ENCODE measurements at regions of chr20 and their contacts with region 1.

Region 1: DNA sequence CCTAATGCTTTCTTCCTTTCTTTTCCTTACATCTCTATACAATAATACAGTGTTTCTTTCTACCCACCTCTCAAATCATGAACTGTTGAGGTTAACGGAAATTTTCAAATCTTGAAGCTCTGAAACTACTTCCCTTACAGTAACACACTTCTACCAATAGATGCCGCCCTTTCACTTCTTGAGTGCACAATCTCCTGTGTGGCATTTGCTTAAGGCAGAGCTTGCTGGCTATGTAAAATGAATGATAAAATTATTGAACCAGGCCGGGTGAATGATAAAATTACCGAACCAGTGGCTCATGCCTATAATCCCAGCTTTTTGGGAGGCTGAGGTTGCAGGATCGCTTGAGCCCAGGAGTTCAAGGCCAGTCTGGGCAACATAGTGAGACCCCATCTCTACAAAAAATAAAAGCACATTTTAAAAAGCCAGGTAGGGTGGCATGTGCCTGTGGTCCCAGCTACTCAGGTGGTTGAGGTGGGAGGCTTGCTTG is 56.8 kb downstream of the KCNS1 start:
- DNase-seq: peak in 5 of 9 experiments; percentile 30 to 82 (median 42)
- ATAC-seq: peak; percentile 86
- H3K4me3 ChIP-seq: no peak overlapping the region
- H3K4me3 Mint-ChIP-seq: no peak overlapping the region
- H3K27ac ChIP-seq: peak overlapping the region in 1 of 2 experiments; percentile 22
- H3K27ac Mint-ChIP-seq: peak overlapping the region; percentile 33
- H3K4me1 ChIP-seq: peaks cover 40% of the 10 kb centered on the region
- H3K4me1 Mint-ChIP-seq: peaks cover 79% of the 10 kb centered on the region
- H3K27me3 ChIP-seq: no peaks in the 10 kb centered on the region
- H3K27me3 Mint-ChIP-seq: no peaks in the 10 kb centered on the region
- CTCF ChIP-seq: peak; percentile 90

Region 2: DNA sequence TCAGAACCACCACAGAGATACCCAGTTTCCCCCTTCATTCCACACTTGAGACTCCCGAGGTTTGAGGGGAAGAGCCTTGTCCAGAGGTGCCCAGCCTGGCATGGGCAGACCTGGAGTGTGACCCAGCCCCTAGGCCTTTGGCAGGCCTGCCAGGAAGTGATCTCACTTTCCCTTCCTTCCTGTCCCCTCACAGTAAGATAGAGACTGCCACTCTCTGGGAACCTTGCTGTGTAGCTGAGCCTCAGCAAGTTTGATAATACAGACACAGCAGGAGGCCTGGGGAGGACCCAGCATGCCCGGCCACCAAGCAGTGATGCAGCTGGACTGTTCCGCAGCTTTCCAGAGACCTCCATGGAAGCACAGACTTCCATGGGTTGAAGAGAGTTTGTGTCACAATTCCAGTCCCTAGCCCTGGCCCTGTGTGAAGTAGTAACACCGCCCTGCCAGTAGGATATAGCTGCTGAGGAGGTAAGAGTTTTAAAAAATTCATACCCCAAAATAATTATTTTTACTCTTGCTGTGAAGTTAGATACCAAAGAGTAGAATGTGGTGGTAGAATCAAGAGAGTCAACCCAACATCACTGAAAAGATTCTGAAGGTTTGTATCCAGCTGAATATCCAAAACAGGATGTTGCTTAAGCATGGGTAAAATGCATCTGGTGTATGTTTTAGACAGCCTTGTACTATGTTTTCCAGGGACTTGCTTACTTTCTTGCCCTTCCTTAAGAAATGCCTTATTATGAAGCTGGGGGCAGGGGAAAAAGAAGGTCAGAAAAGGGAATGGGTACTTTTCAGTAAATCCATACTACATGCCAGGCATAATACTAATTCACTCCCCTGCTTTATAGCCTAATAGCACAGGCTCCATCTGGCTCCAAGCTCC is 445.5 kb before region 1 on chr20:
- CTCF ChIA-PET with region 1: no interaction called
- POLR2A ChIA-PET with region 1: no interaction called
- intact Hi-C with region 1: no loop called
- DNase-seq: peak in 1 of 9 experiments; percentile 41
- ATAC-seq: peak; percentile 38
- H3K4me3 ChIP-seq: peak overlapping the region in 1 of 2 experiments; percentile 10
- H3K4me3 Mint-ChIP-seq: peak overlapping the region; percentile 67
- H3K27ac ChIP-seq: peak overlapping the region in 1 of 2 experiments; percentile 38
- H3K27ac Mint-ChIP-seq: peak overlapping the region; percentile 87
- H3K4me1 ChIP-seq: peaks cover 26% of the 10 kb centered on the region
- H3K4me1 Mint-ChIP-seq: peaks cover 39% of the 10 kb centered on the region
- H3K27me3 ChIP-seq: no peaks in the 10 kb centered on the region
- H3K27me3 Mint-ChIP-seq: no peaks in the 10 kb centered on the region
- CTCF ChIP-seq: peak; percentile 13

Region 3: GRCh38 chr20:44909872-44910689 is 134.0 kb before region 1 on chr20 and contains the start of gene PABPC1L:
- CTCF ChIA-PET with region 1: no interaction called
- POLR2A ChIA-PET with region 1: no interaction called
- intact Hi-C with region 1: loop called in 1 of 2 experiments (anchors 5 kb)
- DNase-seq: peak; percentile 46 to 89 (median 79)
- ATAC-seq: peak; percentile 99
- H3K4me3 ChIP-seq: peak within 1 kb of the TSS; percentile 66 to 78
- H3K4me3 Mint-ChIP-seq: peak within 1 kb of the TSS; percentile 81
- H3K27ac ChIP-seq: peak within 1 kb of the TSS; percentile 19 to 35
- H3K27ac Mint-ChIP-seq: peak within 1 kb of the TSS; percentile 66
- H3K4me1 ChIP-seq: peaks cover 21% of the 10 kb centered on the region
- H3K4me1 Mint-ChIP-seq: peaks cover 30% of the 10 kb centered on the region
- H3K27me3 ChIP-seq: no peaks in the 10 kb centered on the region
- H3K27me3 Mint-ChIP-seq: no peaks in the 10 kb centered on the region
- CTCF ChIP-seq: no peak
- total RNA-seq, gene PABPC1L: 31.9 to 34.0 TPM

Region 4: DNA sequence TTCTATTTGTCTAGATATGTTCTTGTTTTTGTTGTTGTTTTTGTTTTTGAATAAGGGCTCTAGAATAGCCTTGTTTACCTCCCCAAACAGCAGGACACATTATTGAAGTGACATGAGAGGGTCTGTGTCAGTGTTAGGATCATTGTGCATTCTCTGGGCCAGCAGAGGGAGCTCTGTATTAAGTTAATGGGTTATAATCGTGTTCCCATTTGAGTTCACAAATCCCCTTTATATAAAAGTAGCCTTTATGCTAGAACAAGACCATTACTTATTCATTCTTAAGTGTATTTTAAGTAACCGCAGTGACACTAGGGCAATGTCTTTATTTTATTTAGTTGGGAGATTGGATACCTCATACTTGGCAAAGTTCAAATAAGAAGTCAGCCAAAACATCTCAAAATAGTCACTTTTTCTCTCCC is 33.0 kb before region 1 on chr20:
- CTCF ChIA-PET with region 1: interaction called, 12 read pairs
- POLR2A ChIA-PET with region 1: no interaction called
- intact Hi-C with region 1: loop called in 1 of 2 experiments (anchors 5 kb)
- DNase-seq: peak in 8 of 9 experiments; percentile 14 to 74 (median 57)
- ATAC-seq: peak; percentile 66
- H3K4me3 ChIP-seq: no peak overlapping the region
- H3K4me3 Mint-ChIP-seq: no peak overlapping the region
- H3K27ac ChIP-seq: peak overlapping the region in 1 of 2 experiments; percentile 29
- H3K27ac Mint-ChIP-seq: peak overlapping the region; percentile 35
- H3K4me1 ChIP-seq: peaks cover 23% of the 10 kb centered on the region
- H3K4me1 Mint-ChIP-seq: peaks cover 70% of the 10 kb centered on the region
- H3K27me3 ChIP-seq: no peaks in the 10 kb centered on the region
- H3K27me3 Mint-ChIP-seq: no peaks in the 10 kb centered on the region
- CTCF ChIP-seq: peak; percentile 74

Region 5: DNA sequence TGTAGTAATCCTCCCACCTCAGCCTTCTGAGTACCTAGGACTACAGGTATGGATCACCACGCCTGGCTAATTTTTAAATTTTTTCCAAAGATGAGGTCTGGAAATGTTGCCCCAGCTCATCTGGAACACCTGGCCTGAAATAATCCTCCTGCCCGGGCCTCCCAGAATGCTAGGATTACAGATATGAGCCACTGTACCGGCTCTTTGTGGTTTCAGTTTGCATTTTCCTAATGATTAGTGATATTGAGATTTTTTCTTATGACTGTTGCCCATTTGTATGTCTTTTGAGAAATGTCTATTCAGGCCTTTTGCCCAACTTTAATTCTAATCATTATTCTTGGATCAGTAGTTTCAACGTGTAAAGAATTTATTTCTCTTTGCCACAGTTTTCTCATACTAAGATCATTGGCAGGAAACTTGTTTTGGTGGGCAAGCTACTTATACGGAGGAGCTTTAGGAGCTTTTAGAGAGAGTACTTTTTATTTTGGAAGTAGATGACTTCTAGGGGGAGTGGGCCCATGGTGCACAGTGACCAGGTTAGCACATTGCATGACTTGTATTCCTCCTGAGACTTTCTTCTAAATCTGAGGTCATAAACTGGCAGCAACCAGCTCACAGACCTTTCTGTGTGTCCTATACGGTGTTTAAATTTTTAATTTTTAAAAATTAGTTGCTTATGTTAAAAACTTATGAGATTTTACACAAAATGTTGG is 15.5 kb before region 1 on chr20:
- CTCF ChIA-PET with region 1: interaction called, 17 read pairs
- POLR2A ChIA-PET with region 1: interaction called, 9 read pairs
- intact Hi-C with region 1: no loop called
- DNase-seq: no peak
- ATAC-seq: no peak
- H3K4me3 ChIP-seq: no peak overlapping the region
- H3K4me3 Mint-ChIP-seq: peak overlapping the region; percentile 16
- H3K27ac ChIP-seq: peak overlapping the region in 1 of 2 experiments; percentile 21
- H3K27ac Mint-ChIP-seq: peak overlapping the region; percentile 86
- H3K4me1 ChIP-seq: peaks cover 59% of the 10 kb centered on the region
- H3K4me1 Mint-ChIP-seq: peaks cover 76% of the 10 kb centered on the region
- H3K27me3 ChIP-seq: no peaks in the 10 kb centered on the region
- H3K27me3 Mint-ChIP-seq: no peaks in the 10 kb centered on the region
- CTCF ChIP-seq: no peak

Region 6: GRCh38 chr20:45283548-45284057 is 239.5 kb after region 1 on chr20:
- CTCF ChIA-PET with region 1: interaction called, 4 read pairs
- POLR2A ChIA-PET with region 1: no interaction called
- intact Hi-C with region 1: loop called in 1 of 2 experiments (anchors 1 kb)
- DNase-seq: no peak
- ATAC-seq: no peak
- H3K4me3 ChIP-seq: no peak overlapping the region
- H3K4me3 Mint-ChIP-seq: no peak overlapping the region
- H3K27ac ChIP-seq: no peak overlapping the region
- H3K27ac Mint-ChIP-seq: no peak overlapping the region
- H3K4me1 ChIP-seq: no peaks in the 10 kb centered on the region
- H3K4me1 Mint-ChIP-seq: no peaks in the 10 kb centered on the region
- H3K27me3 ChIP-seq: no peaks in the 10 kb centered on the region
- H3K27me3 Mint-ChIP-seq: peaks cover 24% of the 10 kb centered on the region
- CTCF ChIP-seq: no peak

Region 7: GRCh38 chr20:45293041-45294002 is 249.2 kb after region 1 on chr20:
- CTCF ChIA-PET with region 1: interaction called, 6 read pairs
- POLR2A ChIA-PET with region 1: interaction called, 3 read pairs
- intact Hi-C with region 1: loop called (anchors 1 kb)
- DNase-seq: peak; percentile 66 to 84 (median 80)
- ATAC-seq: peak; percentile 91
- H3K4me3 ChIP-seq: peak overlapping the region; percentile 39 to 76
- H3K4me3 Mint-ChIP-seq: peak overlapping the region; percentile 80
- H3K27ac ChIP-seq: no peak overlapping the region
- H3K27ac Mint-ChIP-seq: no peak overlapping the region
- H3K4me1 ChIP-seq: no peaks in the 10 kb centered on the region
- H3K4me1 Mint-ChIP-seq: peaks cover 13% of the 10 kb centered on the region
- H3K27me3 ChIP-seq: peaks cover 7 to 8% of the 10 kb centered on the region in 2 experiments
- H3K27me3 Mint-ChIP-seq: peaks cover 45% of the 10 kb centered on the region
- CTCF ChIP-seq: peak; percentile 90

Region 8: GRCh38 chr20:45311589-45312211 is 267.6 kb after region 1 on chr20:
- CTCF ChIA-PET with region 1: no interaction called
- POLR2A ChIA-PET with region 1: no interaction called
- intact Hi-C with region 1: loop called in 1 of 2 experiments (anchors 5 kb)
- DNase-seq: peak; percentile 24 to 69 (median 52)
- ATAC-seq: peak; percentile 66
- H3K4me3 ChIP-seq: no peak overlapping the region
- H3K4me3 Mint-ChIP-seq: no peak overlapping the region
- H3K27ac ChIP-seq: no peak overlapping the region
- H3K27ac Mint-ChIP-seq: no peak overlapping the region
- H3K4me1 ChIP-seq: no peaks in the 10 kb centered on the region
- H3K4me1 Mint-ChIP-seq: peaks cover 6% of the 10 kb centered on the region
- H3K27me3 ChIP-seq: peaks cover 0 to 10% of the 10 kb centered on the region in 2 experiments
- H3K27me3 Mint-ChIP-seq: peaks cover 48% of the 10 kb centered on the region
- CTCF ChIP-seq: peak; percentile 67